ENCODE measurements at regions of chr3 and their contacts with region 1.

Region 1: GRCh38 chr3:128607710-128608048 is 42.9 kb downstream of the RPN1 start:
- DNase-seq: no peak
- H3K4me3 ChIP-seq: peak overlapping the region; percentile 68; the same call in 1 of the 2 replicates
- H3K27ac ChIP-seq: no peak overlapping the region
- H3K27me3 ChIP-seq: no peaks in the 10 kb centered on the region
- CTCF ChIP-seq: no peak

Region 2: DNA sequence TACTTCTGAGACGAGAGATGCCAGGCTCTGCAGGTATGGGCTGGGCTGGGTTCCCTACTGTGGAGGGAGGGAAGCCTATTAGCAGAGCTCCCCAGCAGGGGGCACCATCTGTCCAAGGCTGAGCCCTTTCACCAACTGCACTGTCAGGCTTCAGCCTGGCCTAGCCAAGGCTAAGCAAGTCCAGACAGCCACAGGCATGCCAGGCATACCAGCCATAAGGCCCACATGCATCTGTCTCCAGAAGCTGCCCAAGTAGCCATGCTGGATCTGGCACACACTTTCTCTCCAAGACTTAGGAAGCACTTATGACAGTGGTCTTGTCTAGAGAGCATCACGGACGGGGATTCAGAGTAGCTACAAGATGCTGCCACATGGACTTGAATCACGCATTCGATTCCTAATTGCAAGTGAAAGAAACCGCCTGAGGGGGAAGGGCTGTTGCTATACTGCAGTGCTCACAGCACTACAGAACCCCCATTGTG is 512.4 kb before region 1 on chr3:
- CTCF ChIA-PET with region 1: interaction called, 21 read pairs
- POLR2A ChIA-PET with region 1: no interaction called
- DNase-seq: peak; percentile 65
- H3K4me3 ChIP-seq: no peak overlapping the region
- H3K27ac ChIP-seq: peak overlapping the region; percentile 57
- H3K27me3 ChIP-seq: no peaks in the 10 kb centered on the region
- CTCF ChIP-seq: peak; percentile 89

Region 3: GRCh38 chr3:128170805-128171516 is 436.7 kb before region 1 on chr3:
- CTCF ChIA-PET with region 1: interaction called, 14 read pairs
- POLR2A ChIA-PET with region 1: no interaction called
- DNase-seq: peak; percentile 67
- H3K4me3 ChIP-seq: no peak overlapping the region
- H3K27ac ChIP-seq: no peak overlapping the region
- H3K27me3 ChIP-seq: no peaks in the 10 kb centered on the region
- CTCF ChIP-seq: peak; percentile 98

Region 4: GRCh38 chr3:128176276-128176831 is 431.3 kb before region 1 on chr3:
- CTCF ChIA-PET with region 1: interaction called, 10 read pairs
- POLR2A ChIA-PET with region 1: no interaction called
- DNase-seq: no peak
- H3K4me3 ChIP-seq: no peak overlapping the region
- H3K27ac ChIP-seq: no peak overlapping the region
- H3K27me3 ChIP-seq: no peaks in the 10 kb centered on the region
- CTCF ChIP-seq: no peak

Region 5: GRCh38 chr3:128426128-128426921 is 181.4 kb before region 1 on chr3:
- CTCF ChIA-PET with region 1: interaction called, 56 read pairs
- POLR2A ChIA-PET with region 1: interaction called, 4 read pairs
- DNase-seq: no peak
- H3K4me3 ChIP-seq: peak overlapping the region; percentile 43
- H3K27ac ChIP-seq: no peak overlapping the region
- H3K27me3 ChIP-seq: peaks cover 9% of the 10 kb centered on the region
- CTCF ChIP-seq: peak; percentile 59

Region 6: DNA sequence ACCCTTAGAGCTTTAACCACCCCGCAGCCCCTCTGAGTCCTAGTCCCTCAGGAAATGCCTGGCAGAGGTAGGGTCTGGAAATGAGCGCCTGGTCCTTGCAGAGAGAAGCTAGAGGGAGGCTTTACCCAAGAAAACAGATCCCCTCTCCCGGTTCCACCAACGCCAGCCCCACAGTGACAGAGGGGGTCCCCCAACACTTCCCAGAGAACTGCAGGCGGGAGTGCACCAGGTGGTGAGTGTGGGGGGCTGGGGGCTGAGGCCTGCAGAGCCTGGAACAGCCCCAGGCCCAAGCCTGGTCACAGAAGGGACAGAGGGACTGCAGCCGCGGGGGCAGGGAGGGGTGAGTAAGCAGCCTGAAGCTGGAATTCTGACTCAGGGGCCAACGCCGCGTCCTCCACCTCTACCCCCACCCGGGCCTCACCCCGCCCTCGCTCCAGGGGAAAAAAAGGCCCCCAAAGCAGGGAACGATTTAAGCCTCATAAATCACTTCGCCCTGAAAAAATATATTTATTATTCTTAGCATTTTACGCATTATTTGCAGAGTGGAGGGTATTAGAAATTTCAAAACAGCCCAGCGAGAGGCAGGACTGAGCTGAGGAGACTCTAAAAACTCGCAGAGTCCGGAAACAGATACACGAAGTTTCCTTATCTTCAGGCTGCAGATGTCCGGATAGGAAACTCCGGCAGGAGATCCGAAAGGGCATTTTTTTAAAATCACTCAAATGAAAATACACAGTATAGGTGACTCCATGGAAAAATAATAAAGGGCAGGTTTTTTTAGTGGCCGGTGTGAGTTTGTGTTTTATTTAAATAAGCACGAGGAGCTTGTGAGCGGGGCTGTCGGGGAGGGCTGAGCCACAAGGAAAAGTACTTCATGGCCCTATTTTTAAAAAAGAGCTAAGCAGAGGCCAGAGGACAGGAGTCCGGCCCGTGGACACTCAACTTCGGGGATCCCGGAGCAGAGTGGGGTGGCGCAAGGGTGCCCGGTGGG is 124.7 kb before region 1 on chr3:
- CTCF ChIA-PET with region 1: no interaction called
- POLR2A ChIA-PET with region 1: interaction called, 11 read pairs
- DNase-seq: peak; percentile 67
- H3K4me3 ChIP-seq: peak overlapping the region; percentile 54
- H3K27ac ChIP-seq: peak overlapping the region; percentile 91
- H3K27me3 ChIP-seq: no peaks in the 10 kb centered on the region
- CTCF ChIP-seq: peak; percentile 31; the same call in 1 of the 2 replicates

Region 7: DNA sequence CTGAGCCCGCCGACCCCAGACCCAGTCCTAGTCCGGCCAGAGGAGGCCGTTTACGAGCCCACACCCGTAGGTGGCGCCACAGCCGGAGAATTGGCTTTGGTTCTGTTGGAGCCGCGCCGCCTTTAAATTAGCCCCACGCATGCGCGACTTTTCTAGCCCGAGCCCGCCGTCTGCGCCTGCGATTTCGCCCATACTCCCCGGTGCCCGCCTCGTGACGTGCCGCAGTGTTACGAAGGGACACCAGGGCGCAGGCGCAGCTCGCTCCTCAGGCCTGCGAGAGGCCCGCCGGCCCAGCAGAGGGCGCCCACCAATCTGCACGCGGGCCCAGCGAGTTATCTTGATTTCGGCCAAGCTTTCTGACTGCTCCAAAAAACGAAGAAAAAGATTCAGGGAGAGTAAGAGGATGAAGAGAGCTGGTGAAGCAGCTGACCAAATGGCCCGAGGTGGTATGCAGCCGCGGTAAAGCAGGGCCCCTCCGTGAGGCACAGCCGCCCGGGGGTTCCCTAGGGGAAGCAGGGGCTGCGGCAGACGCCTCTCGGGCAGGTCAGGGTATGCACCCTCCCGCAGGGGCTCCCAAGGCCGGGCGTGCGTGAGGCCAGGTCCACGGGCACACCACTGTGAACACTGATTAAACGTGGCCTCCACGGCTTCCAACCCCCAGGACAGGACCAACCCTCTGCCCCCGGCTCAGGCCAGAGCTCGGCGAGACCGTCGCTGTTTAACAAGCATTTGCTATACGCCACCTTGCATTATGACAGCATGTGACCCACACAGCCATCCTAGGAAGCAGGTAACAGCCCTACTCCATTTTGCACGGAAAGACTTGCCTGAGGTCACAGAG is 10.1 kb after region 1 on chr3:
- CTCF ChIA-PET with region 1: interaction called, 23 read pairs
- POLR2A ChIA-PET with region 1: interaction called, 5 read pairs
- DNase-seq: peak; percentile 91
- H3K4me3 ChIP-seq: peak overlapping the region; percentile 86
- H3K27ac ChIP-seq: peak overlapping the region; percentile 75
- H3K27me3 ChIP-seq: no peaks in the 10 kb centered on the region
- CTCF ChIP-seq: peak; percentile 87

Measured in AG04450 (cell line).